ENCODE measurements at regions of chr15 and their contacts with region 1.

Region 1: GRCh38 chr15:59051873-59052861 is 52.8 kb upstream of the CCNB2 start:
- DNase-seq: no peak
- ATAC-seq: no peak
- H3K4me3 ChIP-seq: no peak overlapping the region
- H3K4me3 Mint-ChIP-seq: peak overlapping the region in 2 of 3 donors; percentile 11 to 14
- H3K27ac ChIP-seq: peak overlapping the region; percentile 14
- H3K27ac Mint-ChIP-seq: peak overlapping the region; percentile 81 to 89
- H3K4me1 ChIP-seq: peaks cover 3 to 5% of the 10 kb centered on the region in 2 experiments
- H3K4me1 Mint-ChIP-seq: peaks cover 28 to 35% (median 29%) of the 10 kb centered on the region in 3 donors
- H3K27me3 ChIP-seq: no peaks in the 10 kb centered on the region
- H3K27me3 Mint-ChIP-seq: no peaks in the 10 kb centered on the region

Region 2: GRCh38 chr15:57060799-57061198 is 1991.4 kb before region 1 on chr15:
- CTCF ChIA-PET with region 1: no interaction called
- POLR2A ChIA-PET with region 1: interaction called in 1 of 2 experiments, 10 read pairs
- DNase-seq: no peak
- ATAC-seq: no peak
- H3K4me3 ChIP-seq: no peak overlapping the region
- H3K4me3 Mint-ChIP-seq: no peak overlapping the region
- H3K27ac ChIP-seq: no peak overlapping the region
- H3K27ac Mint-ChIP-seq: no peak overlapping the region
- H3K4me1 ChIP-seq: peaks cover 2 to 9% of the 10 kb centered on the region in 2 experiments
- H3K4me1 Mint-ChIP-seq: peaks cover 39 to 46% (median 40%) of the 10 kb centered on the region in 3 donors
- H3K27me3 ChIP-seq: no peaks in the 10 kb centered on the region
- H3K27me3 Mint-ChIP-seq: no peaks in the 10 kb centered on the region

Region 3: GRCh38 chr15:58329846-58330671 is 722.1 kb before region 1 on chr15:
- CTCF ChIA-PET with region 1: interaction called in 1 of 2 experiments, 12 read pairs
- POLR2A ChIA-PET with region 1: no interaction called
- DNase-seq: no peak
- ATAC-seq: no peak
- H3K4me3 ChIP-seq: no peak overlapping the region
- H3K4me3 Mint-ChIP-seq: peak overlapping the region in 1 of 3 donors; percentile 56
- H3K27ac ChIP-seq: no peak overlapping the region
- H3K27ac Mint-ChIP-seq: no peak overlapping the region
- H3K4me1 ChIP-seq: peaks cover 22 to 29% of the 10 kb centered on the region in 2 experiments
- H3K4me1 Mint-ChIP-seq: peaks cover 35 to 39% (median 37%) of the 10 kb centered on the region in 3 donors
- H3K27me3 ChIP-seq: peaks cover 0 to 2% of the 10 kb centered on the region in 2 experiments
- H3K27me3 Mint-ChIP-seq: no peaks in the 10 kb centered on the region

Region 4: GRCh38 chr15:59035201-59035600 is 17.0 kb before region 1 on chr15:
- CTCF ChIA-PET with region 1: no interaction called
- POLR2A ChIA-PET with region 1: no interaction called
- DNase-seq: no peak
- ATAC-seq: no peak
- H3K4me3 ChIP-seq: no peak overlapping the region
- H3K4me3 Mint-ChIP-seq: no peak overlapping the region
- H3K27ac ChIP-seq: no peak overlapping the region
- H3K27ac Mint-ChIP-seq: peak overlapping the region in 1 of 2 donors; percentile 25
- H3K4me1 ChIP-seq: peaks cover 0 to 5% of the 10 kb centered on the region in 2 experiments
- H3K4me1 Mint-ChIP-seq: peaks cover 51 to 58% (median 57%) of the 10 kb centered on the region in 3 donors
- H3K27me3 ChIP-seq: no peaks in the 10 kb centered on the region
- H3K27me3 Mint-ChIP-seq: no peaks in the 10 kb centered on the region

Region 5: GRCh38 chr15:59063042-59063441 is 10.9 kb after region 1 on chr15:
- CTCF ChIA-PET with region 1: no interaction called
- POLR2A ChIA-PET with region 1: no interaction called
- DNase-seq: no peak
- ATAC-seq: no peak
- H3K4me3 ChIP-seq: no peak overlapping the region
- H3K4me3 Mint-ChIP-seq: no peak overlapping the region
- H3K27ac ChIP-seq: no peak overlapping the region
- H3K27ac Mint-ChIP-seq: peak overlapping the region in 1 of 2 donors; percentile 18
- H3K4me1 ChIP-seq: no peaks in the 10 kb centered on the region
- H3K4me1 Mint-ChIP-seq: peaks cover 0 to 3% (median 0%) of the 10 kb centered on the region in 3 donors
- H3K27me3 ChIP-seq: no peaks in the 10 kb centered on the region
- H3K27me3 Mint-ChIP-seq: no peaks in the 10 kb centered on the region

Measured in T-cell (primary cell).